CD8-positive, alpha-beta memory T cell (primary cell): ENCODE measurements at regions of chr5 and their contacts with region 1.

Region 1: GRCh38 chr5:170225326-170226128 is 7.3 kb upstream of the C5orf58 start:
- DNase-seq: peak; percentile 62 to 80 (median 63)
- H3K4me3 ChIP-seq: no peak overlapping the region
- H3K4me3 Mint-ChIP-seq: no peak overlapping the region
- H3K27ac ChIP-seq: no peak overlapping the region
- H3K27ac Mint-ChIP-seq: peak overlapping the region in 2 of 8 donors; percentile 5 to 74
- H3K4me1 ChIP-seq: no peaks in the 10 kb centered on the region
- H3K4me1 Mint-ChIP-seq: peaks cover 3 to 6% (median 4%) of the 10 kb centered on the region in 3 donors
- H3K27me3 ChIP-seq: no peaks in the 10 kb centered on the region
- H3K27me3 Mint-ChIP-seq: peaks cover 0 to 8% of the 10 kb centered on the region in 2 donors

Region 2: GRCh38 chr5:170252720-170253350 is 27.3 kb after region 1 on chr5:
- CTCF ChIA-PET with region 1: interaction called, 11 read pairs
- POLR2A ChIA-PET with region 1: no interaction called
- DNase-seq: no peak
- H3K4me3 ChIP-seq: no peak overlapping the region
- H3K4me3 Mint-ChIP-seq: no peak overlapping the region
- H3K27ac ChIP-seq: no peak overlapping the region
- H3K27ac Mint-ChIP-seq: peak overlapping the region in 7 of 8 donors; percentile 14 to 97 (median 87)
- H3K4me1 ChIP-seq: peaks cover 23% of the 10 kb centered on the region
- H3K4me1 Mint-ChIP-seq: peaks cover 54 to 82% (median 79%) of the 10 kb centered on the region in 3 donors
- H3K27me3 ChIP-seq: no peaks in the 10 kb centered on the region
- H3K27me3 Mint-ChIP-seq: no peaks in the 10 kb centered on the region

Region 3: GRCh38 chr5:170267431-170268152 is 42.1 kb after region 1 on chr5:
- CTCF ChIA-PET with region 1: interaction called, 55 read pairs
- POLR2A ChIA-PET with region 1: interaction called, 3 read pairs
- DNase-seq: peak; percentile 72 to 87 (median 78)
- H3K4me3 ChIP-seq: peak overlapping the region; percentile 35
- H3K4me3 Mint-ChIP-seq: peak overlapping the region; percentile 64 to 83 (median 70)
- H3K27ac ChIP-seq: peak overlapping the region; percentile 2
- H3K27ac Mint-ChIP-seq: peak overlapping the region; percentile 93 to 99 (median 96)
- H3K4me1 ChIP-seq: peaks cover 90% of the 10 kb centered on the region
- H3K4me1 Mint-ChIP-seq: peaks cover 86 to 97% (median 93%) of the 10 kb centered on the region in 3 donors
- H3K27me3 ChIP-seq: no peaks in the 10 kb centered on the region
- H3K27me3 Mint-ChIP-seq: peaks cover 0 to 2% of the 10 kb centered on the region in 2 donors

Region 4: GRCh38 chr5:170293273-170293672 is 67.7 kb after region 1 on chr5:
- CTCF ChIA-PET with region 1: interaction called, 25 read pairs
- POLR2A ChIA-PET with region 1: interaction called, 4 read pairs
- DNase-seq: peak in 4 of 5 donors; percentile 49 to 78 (median 70)
- H3K4me3 ChIP-seq: peak overlapping the region; percentile 100
- H3K4me3 Mint-ChIP-seq: peak overlapping the region; percentile 98 to 100 (median 99)
- H3K27ac ChIP-seq: peak overlapping the region; percentile 19
- H3K27ac Mint-ChIP-seq: peak overlapping the region; percentile 93 to 99 (median 96)
- H3K4me1 ChIP-seq: peaks cover 70% of the 10 kb centered on the region
- H3K4me1 Mint-ChIP-seq: peaks cover 66 to 77% (median 72%) of the 10 kb centered on the region in 3 donors
- H3K27me3 ChIP-seq: no peaks in the 10 kb centered on the region
- H3K27me3 Mint-ChIP-seq: no peaks in the 10 kb centered on the region

Region 5: DNA sequence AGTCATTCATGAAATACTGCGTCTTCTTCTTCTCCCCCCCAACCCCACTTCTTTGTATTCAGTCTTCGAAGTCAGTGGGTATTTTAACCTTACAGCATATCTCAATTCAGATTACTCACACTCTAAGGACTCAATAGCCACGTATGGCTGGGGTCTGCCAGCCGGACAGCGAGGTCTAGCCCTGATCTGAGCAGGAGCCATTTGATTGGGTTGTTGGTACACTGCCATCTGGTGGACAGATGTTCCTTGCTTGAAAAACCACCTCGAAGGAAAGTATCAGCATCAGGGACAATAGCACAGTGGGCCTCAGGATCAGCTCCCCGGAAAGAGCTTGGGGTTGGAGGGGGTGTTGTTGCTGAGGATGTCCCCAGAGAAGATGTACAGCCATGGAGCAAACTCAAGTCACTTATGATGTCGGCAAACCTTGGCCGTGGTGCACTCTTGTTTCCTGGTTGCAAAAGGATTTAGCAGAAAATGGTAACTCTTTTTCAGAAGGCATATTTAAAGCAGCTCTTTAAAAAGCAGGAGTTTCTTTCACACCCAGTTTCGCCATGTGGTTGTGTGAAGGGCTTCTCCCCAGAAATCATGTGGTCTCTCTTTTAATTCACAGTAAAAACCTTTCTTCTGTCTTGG is 195.4 kb after region 1 on chr5:
- CTCF ChIA-PET with region 1: interaction called, 22 read pairs
- POLR2A ChIA-PET with region 1: no interaction called
- DNase-seq: peak; percentile 12 to 55 (median 30)
- H3K4me3 ChIP-seq: no peak overlapping the region
- H3K4me3 Mint-ChIP-seq: no peak overlapping the region
- H3K27ac ChIP-seq: no peak overlapping the region
- H3K27ac Mint-ChIP-seq: no peak overlapping the region
- H3K4me1 ChIP-seq: peaks cover 20% of the 10 kb centered on the region
- H3K4me1 Mint-ChIP-seq: peaks cover 21 to 29% (median 27%) of the 10 kb centered on the region in 3 donors
- H3K27me3 ChIP-seq: no peaks in the 10 kb centered on the region
- H3K27me3 Mint-ChIP-seq: peaks cover 8 to 9% of the 10 kb centered on the region in 2 donors